IMR-90 (cell line): ENCODE measurements at regions of chr9 and their contacts with region 1.

Region 1: DNA sequence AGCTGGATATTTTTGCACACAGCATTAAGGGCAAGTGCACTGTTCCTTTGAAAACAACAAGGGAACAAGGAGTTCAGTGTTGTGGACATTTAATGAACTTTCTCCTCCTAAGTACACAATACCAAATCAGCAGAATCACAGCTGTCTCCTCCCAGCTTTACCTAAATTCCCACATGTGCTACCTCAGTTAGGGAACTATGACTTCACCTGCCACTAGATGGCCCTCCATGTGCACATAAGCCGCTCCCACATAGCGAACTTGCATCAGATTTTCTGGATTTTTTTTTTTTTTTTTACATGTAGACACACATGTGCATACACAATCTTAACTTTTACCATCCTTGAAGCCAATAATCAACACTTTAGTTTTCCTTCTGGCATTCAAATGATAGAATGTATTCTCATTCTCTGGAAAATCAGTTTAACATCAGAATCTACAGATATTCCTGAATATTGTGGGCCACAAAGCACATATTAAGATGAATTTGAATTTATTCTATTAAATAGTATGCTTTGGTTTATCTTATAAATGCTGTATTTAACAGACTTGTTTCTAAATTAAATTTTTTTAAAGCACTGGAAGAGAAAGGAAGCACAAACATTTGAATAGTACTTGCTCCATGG is 123.6 kb downstream of the PALM2AKAP2 start:
- DNase-seq: peak; percentile 83
- ATAC-seq: peak; percentile 59
- H3K4me3 ChIP-seq: no peak overlapping the region
- H3K27ac ChIP-seq: no peak overlapping the region
- H3K4me1 ChIP-seq: peaks cover 20% of the 10 kb centered on the region
- H3K27me3 ChIP-seq: no peaks in the 10 kb centered on the region
- CTCF ChIP-seq: peak; percentile 93
- POLR2A ChIP-seq: no peak
- RAD21 ChIP-seq: peak; percentile 97

Region 2: GRCh38 chr9:110217656-110218099 is 314.1 kb after region 1 on chr9:
- CTCF ChIA-PET with region 1: interaction called, 4 read pairs
- POLR2A ChIA-PET with region 1: no interaction called
- dilution Hi-C with region 1: no loop called
- in situ Hi-C with region 1: no loop called
- intact Hi-C with region 1: loop called (anchors 1 kb)
- DNase-seq: peak; percentile 63
- ATAC-seq: peak; percentile 74
- H3K4me3 ChIP-seq: no peak overlapping the region
- H3K27ac ChIP-seq: no peak overlapping the region
- H3K4me1 ChIP-seq: no peaks in the 10 kb centered on the region; the same call in 1 of the 2 replicates
- H3K27me3 ChIP-seq: peaks cover 2% of the 10 kb centered on the region
- CTCF ChIP-seq: peak; percentile 75
- POLR2A ChIP-seq: no peak
- RAD21 ChIP-seq: peak; percentile 68